ENCODE measurements at regions of chr13 and their contacts with region 1.

Region 1: GRCh38 chr13:74287724-74288169 is 153.5 kb upstream of the KLF12 start:
- DNase-seq: peak; percentile 69
- H3K4me3 ChIP-seq: no peak overlapping the region
- H3K27ac ChIP-seq: no peak overlapping the region
- H3K4me1 ChIP-seq: peaks cover 4% of the 10 kb centered on the region
- H3K27me3 ChIP-seq: no peaks in the 10 kb centered on the region
- CTCF ChIP-seq: no peak
- POLR2A ChIP-seq: no peak

Region 2: DNA sequence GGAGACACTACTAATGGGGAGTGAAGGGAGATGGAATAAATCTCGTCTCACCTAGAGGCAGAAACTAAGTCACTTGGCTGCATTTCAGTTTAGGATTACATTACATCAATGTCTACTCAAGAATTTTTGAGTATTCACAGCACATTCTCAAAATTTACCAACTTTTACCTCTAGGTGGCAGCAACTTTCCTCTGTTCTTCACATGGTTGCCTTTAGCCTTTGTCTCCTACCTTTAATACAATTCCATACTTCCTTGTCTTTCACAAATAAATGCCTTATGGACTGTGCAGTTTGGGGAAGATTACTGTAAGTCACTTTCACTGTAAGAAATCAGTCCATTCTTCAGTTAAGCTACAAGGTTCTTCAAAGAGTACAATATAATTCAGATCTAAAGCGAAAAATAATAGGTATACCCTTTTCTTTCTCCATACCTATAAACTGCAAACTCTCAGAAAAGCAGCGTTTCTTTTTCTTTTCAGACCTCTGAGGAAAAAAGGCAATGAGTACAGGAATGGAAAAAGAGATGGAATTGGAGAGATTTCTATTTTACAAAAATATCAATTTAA is 532.9 kb before region 1 on chr13:
- CTCF ChIA-PET with region 1: interaction called, 15 read pairs
- POLR2A ChIA-PET with region 1: no interaction called
- dilution Hi-C with region 1: no loop called
- intact Hi-C with region 1: loop called (anchors 1 kb)
- DNase-seq: peak; percentile 79
- H3K4me3 ChIP-seq: no peak overlapping the region
- H3K27ac ChIP-seq: no peak overlapping the region
- H3K4me1 ChIP-seq: no peaks in the 10 kb centered on the region
- H3K27me3 ChIP-seq: no peaks in the 10 kb centered on the region
- CTCF ChIP-seq: peak; percentile 36 to 51
- POLR2A ChIP-seq: no peak

Region 3: DNA sequence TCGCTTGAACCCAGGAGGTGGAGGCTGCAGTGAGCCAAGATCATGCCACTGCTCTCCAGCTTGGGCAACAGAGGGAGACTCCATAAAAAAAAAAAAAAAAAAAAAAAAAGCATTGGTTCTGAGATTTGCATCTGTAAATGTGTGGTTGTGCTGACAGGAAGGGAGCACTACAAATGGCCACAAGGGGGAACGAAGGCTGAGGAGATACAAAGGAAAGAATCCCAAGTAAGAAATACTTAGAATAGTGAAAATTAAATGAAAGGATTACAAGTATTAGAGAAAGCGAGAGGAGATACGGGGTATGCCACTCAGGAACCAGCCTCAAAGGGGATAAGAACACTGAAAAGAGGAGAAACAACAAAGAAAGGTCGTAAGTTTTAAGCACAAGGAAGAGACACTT is 438.5 kb before region 1 on chr13:
- CTCF ChIA-PET with region 1: interaction called, 23 read pairs
- POLR2A ChIA-PET with region 1: no interaction called
- dilution Hi-C with region 1: no loop called
- intact Hi-C with region 1: no loop called
- DNase-seq: peak; percentile 36
- H3K4me3 ChIP-seq: no peak overlapping the region
- H3K27ac ChIP-seq: no peak overlapping the region
- H3K4me1 ChIP-seq: peaks cover 8% of the 10 kb centered on the region
- H3K27me3 ChIP-seq: no peaks in the 10 kb centered on the region
- CTCF ChIP-seq: peak; percentile 21 to 24
- POLR2A ChIP-seq: no peak

Region 4: GRCh38 chr13:74040200-74040599 is 247.5 kb before region 1 on chr13:
- CTCF ChIA-PET with region 1: interaction called, 7 read pairs
- POLR2A ChIA-PET with region 1: no interaction called
- dilution Hi-C with region 1: no loop called
- intact Hi-C with region 1: loop called (anchors 10 kb)
- DNase-seq: peak; percentile 18
- H3K4me3 ChIP-seq: no peak overlapping the region
- H3K27ac ChIP-seq: no peak overlapping the region
- H3K4me1 ChIP-seq: no peaks in the 10 kb centered on the region
- H3K27me3 ChIP-seq: no peaks in the 10 kb centered on the region
- CTCF ChIP-seq: peak; percentile 45 to 46
- POLR2A ChIP-seq: no peak

Region 5: GRCh38 chr13:74306496-74306895 is 18.7 kb after region 1 on chr13:
- CTCF ChIA-PET with region 1: interaction called, 10 read pairs
- POLR2A ChIA-PET with region 1: no interaction called
- dilution Hi-C with region 1: no loop called
- intact Hi-C with region 1: no loop called
- DNase-seq: peak; percentile 17
- H3K4me3 ChIP-seq: no peak overlapping the region
- H3K27ac ChIP-seq: no peak overlapping the region
- H3K4me1 ChIP-seq: no peaks in the 10 kb centered on the region
- H3K27me3 ChIP-seq: peaks cover 0 to 6% of the 10 kb centered on the region in 2 experiments
- CTCF ChIP-seq: no peak
- POLR2A ChIP-seq: no peak

Region 6: GRCh38 chr13:74641586-74641985 is 353.8 kb after region 1 on chr13:
- CTCF ChIA-PET with region 1: no interaction called
- POLR2A ChIA-PET with region 1: no interaction called
- dilution Hi-C with region 1: no loop called
- intact Hi-C with region 1: no loop called
- DNase-seq: no peak
- H3K4me3 ChIP-seq: no peak overlapping the region
- H3K27ac ChIP-seq: no peak overlapping the region
- H3K4me1 ChIP-seq: no peaks in the 10 kb centered on the region
- H3K27me3 ChIP-seq: peaks cover 0 to 4% of the 10 kb centered on the region in 2 experiments
- CTCF ChIP-seq: no peak
- POLR2A ChIP-seq: no peak

Region 7: DNA sequence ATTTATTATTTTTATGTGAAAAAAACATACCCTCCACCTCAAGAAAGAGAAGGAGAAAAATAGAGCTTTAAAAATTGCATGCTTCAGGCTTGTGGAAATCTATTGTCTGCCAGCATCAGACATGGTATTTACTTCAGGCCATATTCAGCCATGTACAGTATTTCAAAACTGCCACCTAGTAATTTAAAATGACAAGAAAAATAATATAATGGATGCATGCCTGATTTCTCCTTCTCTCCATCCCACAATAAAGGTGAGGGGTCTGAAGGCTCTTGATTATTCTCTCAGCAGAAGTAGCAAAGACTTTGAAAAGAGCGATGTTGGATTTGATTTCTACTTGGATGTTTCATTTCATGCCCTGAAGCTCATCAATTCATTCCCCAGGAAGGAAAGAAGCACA is 943.5 kb after region 1 on chr13:
- CTCF ChIA-PET with region 1: no interaction called
- POLR2A ChIA-PET with region 1: interaction called, 10 read pairs
- dilution Hi-C with region 1: no loop called
- intact Hi-C with region 1: no loop called
- DNase-seq: no peak
- H3K4me3 ChIP-seq: no peak overlapping the region
- H3K27ac ChIP-seq: no peak overlapping the region
- H3K4me1 ChIP-seq: no peaks in the 10 kb centered on the region
- H3K27me3 ChIP-seq: no peaks in the 10 kb centered on the region
- CTCF ChIP-seq: no peak
- POLR2A ChIP-seq: no peak